ENCODE measurements at regions of chr10 and their contacts with region 1.

Region 1: DNA sequence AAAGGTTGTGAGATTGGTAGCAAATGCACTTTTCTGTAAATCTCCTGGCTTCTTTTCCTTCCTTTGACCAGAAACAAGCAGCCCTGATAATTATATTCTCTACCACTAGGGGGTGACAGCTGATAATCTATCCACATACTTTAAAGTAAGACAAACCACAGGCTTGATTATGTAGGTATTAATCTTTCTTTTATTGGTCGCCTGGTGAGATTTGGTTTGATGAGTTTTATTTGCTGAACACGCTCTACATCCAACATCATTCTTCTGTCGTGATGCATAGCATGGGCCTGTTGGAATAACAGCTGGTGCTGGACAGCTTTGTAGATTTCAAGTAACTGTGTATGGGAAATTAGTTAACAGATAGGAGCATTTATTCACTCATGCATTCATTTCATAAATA is 63.5 kb downstream of the ZNF365 start:
- DNase-seq: no peak
- ATAC-seq: peak; percentile 77
- H3K4me3 ChIP-seq: no peak overlapping the region
- H3K27ac ChIP-seq: no peak overlapping the region
- H3K4me1 ChIP-seq: peaks cover 3 to 20% of the 10 kb centered on the region in 2 donors
- H3K27me3 ChIP-seq: no peaks in the 10 kb centered on the region

Region 2: DNA sequence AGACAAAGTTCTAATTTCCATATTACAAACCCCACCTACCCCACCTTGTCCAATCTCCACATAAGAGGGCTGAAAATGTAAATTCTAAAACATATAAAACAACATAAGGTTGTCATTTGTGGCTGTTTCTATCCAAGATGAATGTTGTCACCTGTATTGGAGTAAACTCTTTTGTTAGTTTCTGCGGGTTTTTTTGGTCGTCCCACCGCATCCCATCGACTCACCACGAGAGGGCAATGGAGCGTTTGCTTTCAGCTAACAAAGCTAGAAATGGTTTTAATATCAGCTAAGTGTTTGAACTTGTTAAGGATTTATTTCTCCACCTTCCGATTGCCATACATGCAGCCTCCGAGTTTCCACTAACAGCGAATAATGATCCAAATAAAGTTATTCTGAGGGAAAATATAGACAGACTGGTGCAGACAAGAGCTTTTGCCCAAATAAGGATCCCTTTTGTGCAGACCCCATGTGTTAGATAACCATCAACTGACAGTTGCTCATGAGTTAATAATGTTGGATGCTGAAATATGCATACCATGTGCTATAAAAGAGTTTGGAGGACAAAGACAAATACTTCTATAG is 399.0 kb before region 1 on chr10:
- intact Hi-C with region 1: loop called in 1 of 2 experiments (anchors 10 kb)
- DNase-seq: peak; percentile 74 to 84
- ATAC-seq: peak; percentile 76
- H3K4me3 ChIP-seq: peak overlapping the region in 1 of 2 donors; percentile 26
- H3K27ac ChIP-seq: peak overlapping the region; percentile 44 to 64
- H3K4me1 ChIP-seq: peaks cover 5 to 8% of the 10 kb centered on the region in 2 donors
- H3K27me3 ChIP-seq: no peaks in the 10 kb centered on the region

Region 3: DNA sequence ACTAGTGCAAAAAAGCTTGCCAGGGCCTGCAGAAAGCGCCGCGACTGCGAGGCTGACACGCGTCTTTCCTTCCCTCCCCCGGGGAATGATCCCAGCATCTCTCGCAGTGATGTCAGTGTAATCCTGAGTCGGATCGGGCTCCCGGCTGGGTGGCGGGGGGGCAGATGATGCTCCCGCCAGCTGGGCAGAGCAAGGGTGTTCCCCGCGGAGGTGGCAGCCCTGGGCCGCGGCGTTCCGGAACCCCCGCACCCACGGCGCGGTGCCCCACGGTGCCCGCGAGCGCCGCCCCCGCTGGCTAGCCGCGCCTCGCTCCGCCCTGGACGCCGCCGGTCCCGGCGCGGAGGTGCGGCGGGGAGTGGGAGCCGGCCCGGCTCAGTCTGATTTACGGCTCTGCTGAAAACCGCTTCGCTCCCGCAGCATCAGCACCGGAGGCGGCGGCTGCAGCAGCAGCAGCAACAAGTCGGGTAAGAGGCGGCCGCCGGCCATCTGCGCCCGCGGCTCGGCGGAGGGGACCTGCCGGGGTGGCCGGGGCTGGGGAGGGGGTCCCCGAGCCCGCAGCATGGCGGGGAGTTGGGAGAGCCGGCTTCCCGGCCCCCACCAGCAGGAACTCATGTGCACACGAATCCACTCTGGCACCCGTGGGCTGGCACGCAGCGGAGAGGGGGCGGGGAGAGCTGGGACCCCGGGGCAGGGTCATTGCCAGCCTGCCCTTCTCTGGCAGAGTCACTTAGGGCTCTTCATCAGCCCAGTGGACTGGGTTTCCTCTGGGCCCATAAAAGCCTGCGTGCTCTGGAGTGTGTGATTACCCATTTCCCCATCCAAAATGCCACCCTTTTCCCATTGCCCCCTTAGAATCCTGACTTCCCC is 63.5 kb before region 1 on chr10 and contains the start of gene ZNF365:
- intact Hi-C with region 1: loop called in 1 of 2 experiments (anchors 5 kb)
- DNase-seq: peak; percentile 60 to 82
- ATAC-seq: peak; percentile 65
- H3K4me3 ChIP-seq: peak within 1 kb of the TSS; percentile 64 to 84
- H3K27ac ChIP-seq: no peak within 1 kb of the TSS
- H3K4me1 ChIP-seq: no peaks in the 10 kb centered on the region
- H3K27me3 ChIP-seq: no peaks in the 10 kb centered on the region
- total RNA-seq, gene ZNF365: 1.1 to 2.4 TPM

Region 4: GRCh38 chr10:62816331-62817120 is 378.8 kb after region 1 on chr10 and contains the start of gene EGR2:
- intact Hi-C with region 1: loop called (anchors 5 to 10 kb)
- DNase-seq: peak; percentile 96 to 97
- ATAC-seq: peak; percentile 92
- H3K4me3 ChIP-seq: peak within 1 kb of the TSS; percentile 51 to 74
- H3K27ac ChIP-seq: peak within 1 kb of the TSS; percentile 50 to 66
- H3K4me1 ChIP-seq: no peaks in the 10 kb centered on the region
- H3K27me3 ChIP-seq: no peaks in the 10 kb centered on the region
- total RNA-seq, gene EGR2: 11.4 to 23.0 TPM

Region 5: GRCh38 chr10:63083904-63084689 is 646.4 kb after region 1 on chr10:
- intact Hi-C with region 1: loop called in 1 of 2 experiments (anchors 10 kb)
- DNase-seq: peak; percentile 73
- ATAC-seq: peak; percentile 84
- H3K4me3 ChIP-seq: no peak overlapping the region
- H3K27ac ChIP-seq: no peak overlapping the region
- H3K4me1 ChIP-seq: no peaks in the 10 kb centered on the region
- H3K27me3 ChIP-seq: no peaks in the 10 kb centered on the region

Region 6: DNA sequence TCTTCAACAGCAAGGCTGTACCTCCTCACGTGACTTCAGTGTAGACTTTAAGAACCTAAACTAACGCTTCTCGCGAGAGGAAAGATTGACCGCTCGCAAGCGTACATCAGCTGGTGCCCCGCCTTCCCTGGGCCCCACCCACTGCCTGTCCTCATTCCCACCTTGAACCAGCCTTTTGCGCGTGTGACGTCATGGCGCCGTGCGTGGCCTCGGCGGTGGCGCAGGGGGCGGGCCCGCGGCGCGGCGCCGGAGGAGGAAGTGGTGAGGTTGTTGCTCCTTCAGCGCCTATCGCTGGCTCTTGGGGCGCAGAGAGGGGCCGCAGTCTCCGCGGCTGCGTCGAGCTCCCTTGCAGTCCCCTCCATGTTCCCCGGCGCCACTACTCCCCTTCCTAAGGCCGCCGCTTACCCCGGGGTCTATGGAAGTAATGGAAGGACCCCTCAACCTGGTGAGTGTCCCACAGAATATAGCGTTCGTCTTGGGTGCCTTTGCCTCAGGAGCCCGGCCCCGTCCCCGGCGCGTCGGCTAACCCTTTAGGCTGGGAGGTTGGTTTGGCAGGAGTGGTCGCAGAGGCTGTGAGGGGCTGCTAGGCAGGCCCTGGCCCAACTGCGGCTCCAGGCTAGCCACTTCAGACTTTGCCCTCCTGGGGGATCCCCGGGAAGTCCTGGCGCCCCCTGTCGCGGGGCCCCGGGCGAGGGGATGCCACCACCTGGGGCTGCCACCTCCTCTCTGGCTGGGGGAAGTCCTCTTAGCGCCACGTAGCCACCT is 695.5 kb after region 1 on chr10 and contains the start of gene NRBF2:
- intact Hi-C with region 1: loop called in 1 of 2 experiments (anchors 10 kb)
- DNase-seq: peak; percentile 98 to 99
- ATAC-seq: peak; percentile 100
- H3K4me3 ChIP-seq: peak within 1 kb of the TSS; percentile 70 to 81
- H3K27ac ChIP-seq: peak within 1 kb of the TSS in 1 of 2 donors; percentile 34
- H3K4me1 ChIP-seq: no peaks in the 10 kb centered on the region
- H3K27me3 ChIP-seq: no peaks in the 10 kb centered on the region
- total RNA-seq, gene NRBF2: 16.2 to 17.5 TPM

Region 7: GRCh38 chr10:63157845-63158624 is 720.3 kb after region 1 on chr10:
- intact Hi-C with region 1: loop called in 1 of 2 experiments (anchors 5 kb)
- DNase-seq: no peak
- ATAC-seq: peak; percentile 81
- H3K4me3 ChIP-seq: no peak overlapping the region
- H3K27ac ChIP-seq: no peak overlapping the region
- H3K4me1 ChIP-seq: no peaks in the 10 kb centered on the region
- H3K27me3 ChIP-seq: no peaks in the 10 kb centered on the region

Measured in aorta (tissue), 5 donors.